H1 (cell line): ENCODE measurements at regions of chrX and their contacts with region 1.

Region 1: DNA sequence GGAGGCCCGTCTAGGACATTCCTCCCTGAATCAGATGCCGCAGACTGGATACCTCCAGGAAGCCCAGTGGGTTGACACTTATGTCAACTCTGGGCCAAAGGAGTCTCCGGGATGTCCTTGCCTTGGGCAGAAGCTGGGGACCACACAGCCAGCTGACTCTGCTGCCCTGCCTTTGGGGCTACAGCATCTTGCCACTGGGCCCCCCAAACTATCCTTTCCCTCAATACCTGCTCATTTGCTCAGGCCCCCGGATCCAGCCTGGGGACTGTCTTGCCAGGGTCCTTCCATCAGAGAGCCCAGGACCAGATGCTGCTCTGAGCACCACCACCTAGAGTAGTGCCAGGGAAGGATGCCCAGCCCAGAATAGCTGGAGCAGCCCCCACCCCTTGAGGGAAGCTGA is 19.0 kb downstream of the RAB33A start:
- DNase-seq: no peak
- H3K4me3 ChIP-seq: no peak overlapping the region
- H3K27ac ChIP-seq: no peak overlapping the region
- H3K4me1 ChIP-seq: no peaks in the 10 kb centered on the region
- H3K27me3 ChIP-seq: no peaks in the 10 kb centered on the region
- CTCF ChIP-seq: no peak
- EP300 ChIP-seq: no peak
- POLR2A ChIP-seq: no peak
- RAD21 ChIP-seq: no peak

Region 2: GRCh38 chrX:130176354-130176776 is 14.4 kb before region 1 on chrX:
- CTCF ChIA-PET with region 1: interaction called, 12 read pairs
- POLR2A ChIA-PET with region 1: no interaction called
- DNase-seq: no peak
- H3K4me3 ChIP-seq: no peak overlapping the region
- H3K27ac ChIP-seq: no peak overlapping the region
- H3K4me1 ChIP-seq: no peaks in the 10 kb centered on the region; a peak in 1 of 7 replicates
- H3K27me3 ChIP-seq: peaks cover 0 to 11% (median 9%) of the 10 kb centered on the region in 4 experiments; a peak in 6 of 7 replicates
- CTCF ChIP-seq: no peak
- EP300 ChIP-seq: no peak
- POLR2A ChIP-seq: no peak
- RAD21 ChIP-seq: no peak